Heart left ventricle (tissue), 16 donors: ENCODE measurements at regions of chr20 and their contacts with region 1.

Region 1: GRCh38 chr20:21808863-21809664 is 103.6 kb downstream of the PAX1 start:
- DNase-seq: peak in 4 of 5 donors; percentile 18 to 76 (median 42)
- ATAC-seq: peak in 2 of 4 donors; percentile 34 to 42
- H3K4me3 ChIP-seq: no peak overlapping the region
- H3K27ac ChIP-seq: no peak overlapping the region
- H3K4me1 ChIP-seq: no peaks in the 10 kb centered on the region
- H3K27me3 ChIP-seq: peaks cover 0 to 24% (median 0%) of the 10 kb centered on the region in 9 donors
- CTCF ChIP-seq: peak; percentile 47 to 84 (median 73)
- POLR2A ChIP-seq: no peak

Region 2: GRCh38 chr20:21436205-21436604 is 372.9 kb before region 1 on chr20:
- intact Hi-C with region 1: no loop called
- DNase-seq: no peak
- ATAC-seq: no peak
- H3K4me3 ChIP-seq: no peak overlapping the region
- H3K27ac ChIP-seq: no peak overlapping the region
- H3K4me1 ChIP-seq: no peaks in the 10 kb centered on the region
- H3K27me3 ChIP-seq: peaks cover 0 to 41% (median 8%) of the 10 kb centered on the region in 9 donors
- CTCF ChIP-seq: no peak
- POLR2A ChIP-seq: no peak

Region 3: DNA sequence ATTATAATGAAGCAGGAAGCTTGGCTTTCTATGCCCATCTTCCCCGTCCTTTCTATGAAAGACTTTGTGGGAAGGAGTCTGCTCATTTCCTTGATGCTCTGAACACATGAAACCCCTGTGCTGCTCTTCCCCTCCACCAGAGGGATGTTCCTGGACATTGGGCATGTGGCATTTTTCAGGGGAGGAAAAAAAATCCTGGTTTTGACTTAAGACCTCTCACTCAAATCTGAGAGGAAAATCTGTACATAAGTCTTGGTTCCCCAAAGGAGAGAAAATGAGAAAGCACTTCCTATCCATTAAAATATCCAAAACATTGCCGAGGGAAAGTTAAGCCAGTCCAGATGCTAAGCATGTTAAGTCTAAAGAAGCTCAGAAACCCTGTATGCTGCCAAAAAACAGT is 289.4 kb after region 1 on chr20:
- intact Hi-C with region 1: loop called in 5 of 10 experiments (anchors 5 to 10 kb)
- DNase-seq: no peak
- ATAC-seq: no peak
- H3K4me3 ChIP-seq: no peak overlapping the region
- H3K27ac ChIP-seq: no peak overlapping the region
- H3K4me1 ChIP-seq: no peaks in the 10 kb centered on the region
- H3K27me3 ChIP-seq: no peaks in the 10 kb centered on the region
- CTCF ChIP-seq: no peak
- POLR2A ChIP-seq: no peak

Region 4: GRCh38 chr20:22106308-22106938 is 297.4 kb after region 1 on chr20:
- intact Hi-C with region 1: loop called in 9 of 10 experiments (anchors 2 to 10 kb)
- DNase-seq: no peak
- ATAC-seq: no peak
- H3K4me3 ChIP-seq: no peak overlapping the region
- H3K27ac ChIP-seq: no peak overlapping the region
- H3K4me1 ChIP-seq: no peaks in the 10 kb centered on the region
- H3K27me3 ChIP-seq: peaks cover 0 to 14% (median 0%) of the 10 kb centered on the region in 9 donors
- CTCF ChIP-seq: peak in 11 of 12 donors; percentile 27 to 61 (median 37)
- POLR2A ChIP-seq: no peak

Region 5: GRCh38 chr20:22248051-22248667 is 439.1 kb after region 1 on chr20:
- intact Hi-C with region 1: loop called in 5 of 10 experiments (anchors 5 to 10 kb)
- DNase-seq: no peak
- ATAC-seq: no peak
- H3K4me3 ChIP-seq: no peak overlapping the region
- H3K27ac ChIP-seq: no peak overlapping the region
- H3K4me1 ChIP-seq: no peaks in the 10 kb centered on the region
- H3K27me3 ChIP-seq: peaks cover 0 to 14% (median 5%) of the 10 kb centered on the region in 9 donors
- CTCF ChIP-seq: peak; percentile 28 to 61 (median 43)
- POLR2A ChIP-seq: no peak

Region 6: DNA sequence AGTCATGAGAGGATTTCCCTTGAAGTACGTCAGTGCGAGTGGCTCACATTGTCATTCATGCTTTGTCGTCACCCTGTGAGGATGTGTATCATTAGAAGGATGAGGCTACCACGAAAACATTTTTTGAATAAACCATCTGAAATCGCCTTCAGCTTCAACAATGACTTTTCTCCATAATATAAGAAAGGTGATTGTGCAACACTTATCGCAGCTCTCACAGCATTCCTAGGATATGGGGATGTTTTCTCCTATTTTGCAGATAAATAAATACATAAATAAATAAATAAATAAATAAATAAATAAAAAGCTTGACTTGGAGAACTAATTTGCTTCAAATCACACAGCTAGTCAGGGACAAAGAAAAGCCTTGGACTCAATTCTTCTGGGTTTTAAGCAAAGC is 448.8 kb after region 1 on chr20:
- intact Hi-C with region 1: loop called in 1 of 10 experiments (anchors 10 kb)
- DNase-seq: no peak
- ATAC-seq: no peak
- H3K4me3 ChIP-seq: no peak overlapping the region
- H3K27ac ChIP-seq: no peak overlapping the region
- H3K4me1 ChIP-seq: no peaks in the 10 kb centered on the region
- H3K27me3 ChIP-seq: peaks cover 0 to 14% (median 0%) of the 10 kb centered on the region in 9 donors
- CTCF ChIP-seq: no peak
- POLR2A ChIP-seq: no peak

Region 7: DNA sequence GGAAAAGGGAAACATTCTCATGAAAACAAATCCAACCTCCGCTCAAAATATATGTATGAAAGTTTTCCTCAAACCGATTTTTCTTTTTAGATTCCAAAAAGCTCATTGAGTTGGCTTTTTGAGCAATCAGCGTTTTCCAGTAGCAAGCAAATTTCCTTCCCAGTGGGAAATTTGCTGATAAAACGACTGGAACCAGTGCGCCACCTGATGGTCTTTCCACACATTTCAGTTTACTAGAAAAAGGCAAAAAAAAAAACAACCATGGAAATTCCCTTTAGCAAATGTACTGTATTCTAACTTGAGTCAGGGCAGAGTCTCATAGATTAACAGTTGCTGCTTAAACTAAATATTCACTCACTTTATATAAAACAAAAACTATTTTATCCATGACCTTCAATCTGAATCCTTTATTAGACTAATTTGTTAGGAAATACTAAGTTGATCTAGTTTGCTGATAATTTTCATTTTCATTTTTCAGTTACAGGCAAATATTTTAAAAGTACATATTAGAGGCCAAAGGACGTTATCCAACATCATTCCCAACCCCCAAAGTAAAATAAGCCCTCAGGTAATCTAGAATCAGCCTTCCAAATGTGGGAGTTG is 503.8 kb after region 1 on chr20:
- intact Hi-C with region 1: loop called in 1 of 10 experiments (anchors 5 kb)
- DNase-seq: no peak
- ATAC-seq: no peak
- H3K4me3 ChIP-seq: no peak overlapping the region
- H3K27ac ChIP-seq: no peak overlapping the region
- H3K4me1 ChIP-seq: no peaks in the 10 kb centered on the region
- H3K27me3 ChIP-seq: peaks cover 0 to 41% (median 0%) of the 10 kb centered on the region in 9 donors
- CTCF ChIP-seq: peak; percentile 41 to 72 (median 52)
- POLR2A ChIP-seq: no peak